ENCODE measurements at regions of chr17 and their contacts with region 1.

Region 1: DNA sequence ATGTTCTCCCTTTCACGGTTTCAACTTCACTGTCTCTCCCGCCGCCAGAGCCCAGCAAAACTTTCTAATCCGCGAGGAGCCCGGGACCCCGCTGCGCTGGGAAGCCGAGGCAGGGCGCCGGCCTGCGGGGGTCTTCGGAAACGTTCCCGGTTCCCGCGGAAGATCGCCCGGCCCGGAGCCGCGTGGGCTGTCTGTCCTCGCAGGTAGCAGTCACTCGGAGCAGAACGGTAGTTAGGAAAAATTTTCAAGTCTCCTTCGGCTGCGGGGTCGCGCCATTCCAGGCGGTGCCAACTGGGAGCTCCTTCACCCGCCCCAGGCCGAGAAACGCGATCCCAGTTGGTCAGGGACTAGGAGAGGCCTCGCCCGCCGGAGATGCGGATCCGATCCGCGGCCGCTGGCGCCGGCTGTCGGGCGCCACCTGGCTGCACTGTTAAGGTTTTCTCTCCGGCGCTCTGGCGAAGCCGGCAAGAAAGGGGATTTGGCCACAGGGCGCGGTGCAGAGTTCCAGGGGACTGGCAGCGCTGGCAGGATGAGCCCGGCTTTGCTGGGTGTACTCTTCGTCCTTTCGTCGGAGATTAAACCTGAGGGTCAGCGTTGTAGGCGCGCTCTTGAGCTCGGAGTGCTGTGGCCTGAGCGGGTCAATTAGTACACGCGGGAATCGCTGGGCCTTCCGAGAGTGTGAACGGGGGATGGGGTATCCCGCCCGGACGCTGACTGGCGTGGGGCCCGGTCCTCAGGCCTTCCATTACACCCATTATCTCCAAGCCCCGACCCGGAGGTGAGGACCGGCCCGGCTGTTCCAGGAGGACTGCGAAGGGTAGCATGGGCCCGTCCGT is 135.4 kb downstream of the KCNJ12 start:
- DNase-seq: peak; percentile 21
- H3K4me3 ChIP-seq: peak overlapping the region; percentile 62
- H3K27ac ChIP-seq: no peak overlapping the region
- H3K27me3 ChIP-seq: peaks cover 24% of the 10 kb centered on the region
- CTCF ChIP-seq: peak; percentile 75

Region 2: DNA sequence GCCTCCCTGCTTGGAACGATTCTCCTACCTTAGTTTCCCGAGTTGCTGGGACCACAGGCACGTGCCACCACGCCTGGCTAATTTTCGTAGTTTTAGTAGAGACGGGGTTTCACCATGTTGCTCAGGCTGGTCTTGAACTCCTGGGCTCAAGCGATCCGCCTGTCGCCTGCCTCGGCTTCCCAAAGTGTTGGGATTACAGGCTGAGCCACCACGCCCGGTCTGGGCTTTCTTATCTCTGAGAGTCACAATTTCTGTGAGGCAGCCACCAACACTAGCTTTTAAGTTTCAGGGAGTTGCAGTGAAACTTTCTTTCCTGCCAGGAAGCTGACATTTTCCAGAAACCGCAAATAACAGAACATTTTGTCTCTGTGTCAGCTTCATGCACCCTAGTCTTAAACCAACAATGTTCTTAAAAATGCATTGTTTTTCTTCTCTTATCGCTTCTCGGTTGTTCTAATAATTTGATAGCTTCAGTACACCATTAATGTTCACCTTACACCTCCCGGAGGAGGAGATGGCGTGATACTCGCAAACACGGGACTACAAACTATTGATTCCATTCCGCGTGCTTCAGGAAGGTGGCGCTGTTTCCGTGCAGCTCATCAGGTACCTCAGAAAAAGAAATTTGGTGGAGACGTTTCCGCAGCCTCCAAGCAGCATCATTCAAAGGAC is 392.2 kb before region 1 on chr17:
- CTCF ChIA-PET with region 1: interaction called, 59 read pairs
- POLR2A ChIA-PET with region 1: no interaction called
- DNase-seq: peak; percentile 18
- H3K4me3 ChIP-seq: no peak overlapping the region
- H3K27ac ChIP-seq: no peak overlapping the region
- H3K27me3 ChIP-seq: peaks cover 23% of the 10 kb centered on the region
- CTCF ChIP-seq: peak; percentile 92

Region 3: DNA sequence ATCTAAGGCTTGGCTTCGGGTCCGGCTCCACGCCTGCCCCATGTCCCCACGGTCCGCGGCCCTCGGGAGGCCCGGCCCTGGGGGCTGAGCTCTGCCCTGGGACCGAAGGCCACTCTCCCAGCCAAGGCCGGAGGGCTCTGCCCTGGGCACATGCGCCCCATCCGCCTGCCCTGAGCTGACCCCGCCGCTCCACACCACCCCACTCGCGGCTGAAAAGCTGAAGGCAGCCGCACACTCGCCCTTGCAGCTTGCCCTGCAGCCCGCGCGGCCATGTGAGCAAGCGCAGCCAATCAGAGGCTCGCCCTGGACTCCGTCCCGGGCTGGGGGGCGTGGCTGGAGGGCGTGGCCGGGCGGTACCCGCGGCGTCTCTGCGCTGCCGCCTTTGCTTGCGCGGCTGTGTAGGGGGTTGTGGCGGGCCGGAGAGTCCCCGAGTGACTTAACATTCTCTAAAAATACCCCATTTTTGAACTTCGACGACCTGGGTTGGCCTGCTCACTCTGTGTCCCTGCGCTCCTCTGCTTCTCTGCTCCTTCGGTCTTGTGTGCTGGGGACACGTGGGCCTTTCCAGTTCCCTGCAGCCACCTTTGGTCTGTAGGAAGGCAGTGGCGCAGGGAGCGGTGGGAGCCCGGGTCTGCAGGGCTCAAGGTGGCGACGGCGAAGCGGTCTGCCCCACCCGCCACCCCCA is 235.9 kb before region 1 on chr17:
- CTCF ChIA-PET with region 1: interaction called, 47 read pairs
- POLR2A ChIA-PET with region 1: no interaction called
- DNase-seq: no peak
- H3K4me3 ChIP-seq: peak overlapping the region; percentile 69
- H3K27ac ChIP-seq: no peak overlapping the region
- H3K27me3 ChIP-seq: peaks cover 4% of the 10 kb centered on the region
- CTCF ChIP-seq: no peak

Region 4: DNA sequence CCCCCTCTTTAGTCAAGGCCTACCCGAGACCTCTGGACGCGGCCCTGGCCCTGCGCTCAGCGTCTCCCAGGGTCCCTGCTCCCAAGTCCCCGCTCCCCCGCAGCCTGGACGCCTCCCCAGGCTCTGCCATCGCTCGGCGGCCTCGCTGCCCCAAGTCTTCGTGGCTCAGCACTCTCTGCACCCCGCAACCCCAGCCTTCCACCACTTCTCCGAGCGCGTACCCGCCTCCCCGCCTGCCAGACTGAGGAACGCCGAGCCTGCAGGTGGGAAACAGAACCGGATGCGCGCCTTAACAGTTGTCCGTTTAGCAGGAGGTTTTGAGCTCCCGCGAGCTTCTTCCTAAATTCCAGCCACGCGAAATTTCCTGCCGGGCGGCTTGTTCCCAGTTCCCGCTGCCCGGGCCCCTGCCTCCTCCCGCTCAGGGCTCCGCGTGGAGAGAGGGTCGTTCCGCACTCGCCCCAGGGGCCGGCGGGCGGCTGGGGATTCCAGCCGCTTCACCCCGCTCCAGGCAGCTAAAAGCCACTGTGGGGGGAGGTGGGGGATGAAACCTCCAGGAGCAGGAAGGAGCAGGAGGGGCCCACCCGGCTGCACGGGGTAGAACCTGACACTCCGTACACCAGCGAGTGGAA is 47.7 kb before region 1 on chr17:
- CTCF ChIA-PET with region 1: interaction called, 120 read pairs
- POLR2A ChIA-PET with region 1: no interaction called
- DNase-seq: no peak
- H3K4me3 ChIP-seq: no peak overlapping the region
- H3K27ac ChIP-seq: no peak overlapping the region
- H3K27me3 ChIP-seq: peaks cover 45% of the 10 kb centered on the region
- CTCF ChIP-seq: no peak

Region 5: GRCh38 chr17:21500064-21500463 is 11.5 kb before region 1 on chr17:
- CTCF ChIA-PET with region 1: interaction called, 30 read pairs
- POLR2A ChIA-PET with region 1: no interaction called
- DNase-seq: no peak
- H3K4me3 ChIP-seq: no peak overlapping the region
- H3K27ac ChIP-seq: no peak overlapping the region
- H3K27me3 ChIP-seq: peaks cover 28% of the 10 kb centered on the region
- CTCF ChIP-seq: no peak

Region 6: GRCh38 chr17:21532763-21533385 is 21.3 kb after region 1 on chr17:
- CTCF ChIA-PET with region 1: interaction called, 17 read pairs
- POLR2A ChIA-PET with region 1: no interaction called
- DNase-seq: no peak
- H3K4me3 ChIP-seq: no peak overlapping the region
- H3K27ac ChIP-seq: no peak overlapping the region
- H3K27me3 ChIP-seq: no peaks in the 10 kb centered on the region
- CTCF ChIP-seq: no peak

Region 7: DNA sequence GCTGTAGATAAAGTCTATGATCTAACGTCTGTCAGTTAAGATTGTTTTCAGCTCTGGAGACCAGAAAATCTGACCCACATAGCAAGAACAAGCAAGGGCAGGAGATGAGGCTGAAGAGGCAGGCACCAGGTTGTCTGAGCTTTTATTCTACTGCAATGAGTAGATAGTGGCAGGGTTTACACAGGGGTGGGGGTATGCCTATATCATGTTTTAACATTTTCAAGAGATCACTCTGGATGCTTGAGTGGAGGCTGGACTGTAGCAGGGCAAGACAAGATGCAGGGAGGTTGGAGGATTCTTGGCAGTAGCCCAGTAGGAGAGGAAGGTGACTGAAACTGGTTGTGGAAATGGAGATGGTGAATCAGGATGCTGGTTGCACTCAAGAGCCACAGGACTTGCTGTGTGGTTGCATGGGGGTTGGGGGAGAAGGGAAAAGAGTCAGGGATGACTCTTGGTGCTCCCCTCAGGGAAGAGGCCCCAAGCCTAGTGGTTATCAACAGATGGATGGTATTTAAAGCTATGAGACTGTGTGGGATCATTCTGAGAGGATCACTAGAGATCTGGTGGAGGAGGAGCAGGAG is 37.6 kb after region 1 on chr17:
- CTCF ChIA-PET with region 1: interaction called, 39 read pairs
- POLR2A ChIA-PET with region 1: no interaction called
- DNase-seq: no peak
- H3K4me3 ChIP-seq: peak overlapping the region; percentile 90
- H3K27ac ChIP-seq: peak overlapping the region; percentile 86
- H3K27me3 ChIP-seq: no peaks in the 10 kb centered on the region
- CTCF ChIP-seq: no peak

Region 8: DNA sequence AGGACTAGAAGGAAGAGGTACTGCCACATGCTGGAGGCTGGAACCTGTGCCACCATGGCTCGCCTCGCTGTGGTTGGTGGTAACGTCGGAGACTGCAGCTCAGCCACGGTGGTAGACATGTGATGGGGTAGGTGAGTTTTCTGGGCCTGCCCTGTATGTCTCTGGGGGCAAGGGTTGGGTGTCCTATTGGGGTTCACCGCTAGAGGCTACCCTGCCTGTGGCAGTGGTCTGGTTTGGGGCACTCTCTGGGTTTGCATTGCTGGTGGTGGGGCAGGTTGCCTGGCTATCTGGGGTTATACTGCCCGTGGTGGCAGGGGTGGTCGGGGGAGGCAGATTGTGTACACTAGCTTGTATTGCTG is 101.5 kb after region 1 on chr17:
- CTCF ChIA-PET with region 1: no interaction called
- POLR2A ChIA-PET with region 1: no interaction called
- DNase-seq: no peak
- H3K4me3 ChIP-seq: no peak overlapping the region
- H3K27ac ChIP-seq: no peak overlapping the region
- H3K27me3 ChIP-seq: no peaks in the 10 kb centered on the region
- CTCF ChIP-seq: no peak

Region 9: GRCh38 chr17:21678393-21679081 is 167.0 kb after region 1 on chr17:
- CTCF ChIA-PET with region 1: no interaction called
- POLR2A ChIA-PET with region 1: no interaction called
- DNase-seq: no peak
- H3K4me3 ChIP-seq: no peak overlapping the region
- H3K27ac ChIP-seq: no peak overlapping the region
- H3K27me3 ChIP-seq: no peaks in the 10 kb centered on the region
- CTCF ChIP-seq: no peak